Mammary epithelial cell (primary cell): ENCODE measurements at regions of chr1 and their contacts with region 1.

Region 1: DNA sequence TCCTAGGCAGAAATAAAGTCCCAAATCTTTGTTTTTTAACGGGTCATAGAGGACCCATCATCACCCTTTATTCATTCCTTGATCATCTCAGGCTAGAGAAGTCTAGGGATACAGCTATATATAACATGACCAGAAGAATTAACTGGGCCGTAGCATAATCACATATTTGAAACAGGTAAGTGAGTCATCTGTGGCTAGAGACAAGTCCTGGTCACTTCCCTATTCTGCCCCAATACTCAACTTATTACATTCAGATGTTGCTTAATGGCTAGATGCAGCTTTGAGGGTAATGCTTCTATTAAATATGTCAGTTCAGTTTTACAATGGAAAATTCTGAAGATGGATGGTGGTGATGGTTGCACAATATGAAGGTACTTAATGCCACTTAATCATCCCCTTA is 47.0 kb downstream of the EXO1 start:
- DNase-seq: peak; percentile 42
- H3K4me3 ChIP-seq: no peak overlapping the region
- H3K27ac ChIP-seq: no peak overlapping the region
- H3K4me1 ChIP-seq: no peaks in the 10 kb centered on the region
- H3K27me3 ChIP-seq: no peaks in the 10 kb centered on the region
- CTCF ChIP-seq: no peak

Region 2: DNA sequence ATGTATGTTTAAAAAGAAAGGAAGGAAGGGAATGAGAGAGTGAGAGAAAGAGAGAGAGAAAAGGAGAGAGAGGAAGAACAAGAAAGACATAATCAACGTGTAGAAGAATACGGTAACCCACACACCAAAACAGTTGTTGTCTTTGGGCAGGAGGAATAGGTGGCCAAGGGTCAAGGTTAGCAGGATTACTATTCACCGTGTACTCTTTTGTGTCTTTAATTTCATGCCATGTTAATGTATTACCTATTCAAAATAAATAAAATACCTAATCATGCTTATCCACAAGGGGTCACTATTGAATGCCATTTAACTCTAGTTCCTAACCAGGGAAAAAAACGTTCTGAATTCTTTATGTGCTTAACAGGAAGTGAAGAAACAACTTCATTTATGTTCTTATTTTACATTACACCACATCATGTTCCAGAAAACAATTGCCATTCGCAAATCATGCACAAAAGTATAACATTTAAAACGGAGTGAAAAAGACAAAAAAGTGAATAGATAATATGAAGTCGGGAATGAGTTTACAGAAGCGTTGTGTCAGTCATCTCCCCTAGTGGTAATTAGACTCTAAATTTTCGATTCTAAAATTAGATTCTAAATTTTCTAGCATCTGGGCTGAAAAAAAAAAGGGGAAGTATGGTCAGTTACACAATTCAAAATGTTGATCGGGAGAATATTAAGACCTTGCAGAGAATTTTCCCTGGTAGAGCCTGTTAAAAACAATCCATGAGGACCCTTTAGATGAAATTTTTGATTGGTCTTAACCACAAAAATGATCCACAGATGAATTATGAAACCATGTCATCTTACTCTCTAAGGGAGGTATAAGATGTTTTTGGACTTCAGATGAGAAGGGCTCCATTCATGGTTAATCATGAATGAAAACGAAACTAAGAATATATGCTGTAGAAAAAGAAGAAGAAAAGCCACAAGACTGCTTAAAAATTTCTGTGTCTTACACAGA is 363.5 kb before region 1 on chr1:
- CTCF ChIA-PET with region 1: no interaction called
- dilution Hi-C with region 1: no loop called
- in situ Hi-C with region 1: no loop called
- intact Hi-C with region 1: loop called (anchors 5 kb)
- DNase-seq: peak; percentile 74
- H3K4me3 ChIP-seq: peak overlapping the region; percentile 44 to 82 (median 53)
- H3K27ac ChIP-seq: peak overlapping the region; percentile 92
- H3K4me1 ChIP-seq: peaks cover 15% of the 10 kb centered on the region
- H3K27me3 ChIP-seq: no peaks in the 10 kb centered on the region
- CTCF ChIP-seq: peak; percentile 54 to 55

Region 3: GRCh38 chr1:241592273-241592958 is 302.6 kb before region 1 on chr1:
- CTCF ChIA-PET with region 1: no interaction called
- dilution Hi-C with region 1: no loop called
- in situ Hi-C with region 1: no loop called
- intact Hi-C with region 1: no loop called
- DNase-seq: peak; percentile 99
- H3K4me3 ChIP-seq: no peak overlapping the region
- H3K27ac ChIP-seq: peak overlapping the region; percentile 97
- H3K4me1 ChIP-seq: peaks cover 45% of the 10 kb centered on the region
- H3K27me3 ChIP-seq: no peaks in the 10 kb centered on the region
- CTCF ChIP-seq: no peak

Region 4: GRCh38 chr1:241985787-241986186 is 90.8 kb after region 1 on chr1:
- CTCF ChIA-PET with region 1: interaction called, 4 read pairs
- dilution Hi-C with region 1: no loop called
- in situ Hi-C with region 1: no loop called
- intact Hi-C with region 1: loop called (anchors 1 kb)
- DNase-seq: peak; percentile 40
- H3K4me3 ChIP-seq: no peak overlapping the region
- H3K27ac ChIP-seq: no peak overlapping the region
- H3K4me1 ChIP-seq: no peaks in the 10 kb centered on the region
- H3K27me3 ChIP-seq: no peaks in the 10 kb centered on the region
- CTCF ChIP-seq: peak; percentile 60

Region 5: DNA sequence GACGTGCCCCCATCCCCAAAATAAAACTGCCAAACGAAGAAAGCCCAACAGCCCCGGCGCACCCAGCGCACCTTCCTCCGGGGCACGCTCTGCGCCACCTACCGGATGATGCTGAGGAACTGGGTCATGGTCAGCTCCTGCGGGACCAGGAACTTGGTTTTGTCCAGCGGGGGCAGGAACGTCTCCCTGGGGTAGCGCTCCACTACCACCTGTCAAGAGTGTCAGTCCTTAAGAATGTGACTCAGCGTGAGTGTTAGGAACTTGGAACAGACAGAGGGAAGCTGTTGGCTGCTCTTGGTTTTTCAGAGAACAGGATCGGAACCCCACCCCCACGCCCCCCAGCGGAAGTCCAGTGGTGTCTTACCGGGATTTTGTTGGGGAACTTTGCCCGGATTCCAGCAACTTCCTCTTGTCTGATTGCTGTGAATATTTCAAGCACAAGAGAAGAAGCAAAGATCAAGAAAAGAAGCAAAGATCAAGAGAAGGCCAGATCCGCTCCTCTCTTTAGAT is 103.5 kb after region 1 on chr1:
- CTCF ChIA-PET with region 1: no interaction called
- dilution Hi-C with region 1: no loop called
- in situ Hi-C with region 1: loop called in 1 of 2 experiments (anchors 5 kb)
- intact Hi-C with region 1: loop called (anchors 1 kb)
- DNase-seq: peak; percentile 78
- H3K4me3 ChIP-seq: no peak overlapping the region
- H3K27ac ChIP-seq: no peak overlapping the region
- H3K4me1 ChIP-seq: peaks cover 3% of the 10 kb centered on the region
- H3K27me3 ChIP-seq: no peaks in the 10 kb centered on the region
- CTCF ChIP-seq: peak in 1 of 2 donors; percentile 48

Region 6: DNA sequence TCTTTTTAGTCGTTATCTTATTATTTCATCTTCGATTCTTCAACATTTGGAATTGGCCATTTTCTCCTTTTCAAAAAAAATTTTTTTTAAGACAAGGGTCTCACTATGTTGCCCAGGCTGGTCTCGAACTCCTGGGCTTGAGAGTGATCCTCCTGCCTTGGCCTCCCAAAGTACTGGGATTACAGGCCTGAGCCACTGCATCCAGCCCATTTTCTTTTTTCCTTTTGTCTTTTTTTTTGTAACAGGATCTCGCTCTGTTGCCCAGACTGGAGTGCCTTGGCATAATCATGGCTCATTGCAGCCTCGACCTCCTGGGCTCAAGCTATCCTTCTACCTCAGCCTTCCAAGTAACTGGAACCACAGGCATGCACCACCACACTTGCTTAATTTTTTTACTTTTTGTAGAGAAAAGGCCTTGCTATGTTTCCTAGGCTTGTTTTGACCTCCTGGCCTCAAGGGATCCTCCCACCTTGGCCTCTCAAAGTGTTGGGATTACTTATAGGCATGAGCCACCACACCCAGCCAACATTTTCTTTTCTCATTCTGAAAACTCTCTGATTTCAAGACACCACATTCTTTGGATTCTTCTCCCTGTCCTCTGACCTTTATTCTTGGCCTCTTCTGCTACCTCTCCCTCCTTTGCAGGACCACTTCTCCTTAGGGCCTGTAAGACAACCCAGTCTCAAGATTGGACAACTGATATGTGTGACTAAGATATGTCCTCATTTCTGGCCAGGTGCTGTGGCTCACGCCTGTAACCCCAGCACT is 109.9 kb after region 1 on chr1:
- CTCF ChIA-PET with region 1: no interaction called
- dilution Hi-C with region 1: no loop called
- in situ Hi-C with region 1: loop called in 1 of 2 experiments (anchors 5 kb)
- intact Hi-C with region 1: no loop called
- DNase-seq: no peak
- H3K4me3 ChIP-seq: no peak overlapping the region
- H3K27ac ChIP-seq: no peak overlapping the region
- H3K4me1 ChIP-seq: no peaks in the 10 kb centered on the region
- H3K27me3 ChIP-seq: peaks cover 3% of the 10 kb centered on the region
- CTCF ChIP-seq: no peak

Region 7: GRCh38 chr1:242017584-242018233 is 122.7 kb after region 1 on chr1:
- CTCF ChIA-PET with region 1: no interaction called
- dilution Hi-C with region 1: no loop called
- in situ Hi-C with region 1: no loop called
- intact Hi-C with region 1: loop called (anchors 1 kb)
- DNase-seq: peak; percentile 33
- H3K4me3 ChIP-seq: no peak overlapping the region
- H3K27ac ChIP-seq: no peak overlapping the region
- H3K4me1 ChIP-seq: peaks cover 4% of the 10 kb centered on the region
- H3K27me3 ChIP-seq: peaks cover 2% of the 10 kb centered on the region
- CTCF ChIP-seq: peak; percentile 66 to 79

Region 8: DNA sequence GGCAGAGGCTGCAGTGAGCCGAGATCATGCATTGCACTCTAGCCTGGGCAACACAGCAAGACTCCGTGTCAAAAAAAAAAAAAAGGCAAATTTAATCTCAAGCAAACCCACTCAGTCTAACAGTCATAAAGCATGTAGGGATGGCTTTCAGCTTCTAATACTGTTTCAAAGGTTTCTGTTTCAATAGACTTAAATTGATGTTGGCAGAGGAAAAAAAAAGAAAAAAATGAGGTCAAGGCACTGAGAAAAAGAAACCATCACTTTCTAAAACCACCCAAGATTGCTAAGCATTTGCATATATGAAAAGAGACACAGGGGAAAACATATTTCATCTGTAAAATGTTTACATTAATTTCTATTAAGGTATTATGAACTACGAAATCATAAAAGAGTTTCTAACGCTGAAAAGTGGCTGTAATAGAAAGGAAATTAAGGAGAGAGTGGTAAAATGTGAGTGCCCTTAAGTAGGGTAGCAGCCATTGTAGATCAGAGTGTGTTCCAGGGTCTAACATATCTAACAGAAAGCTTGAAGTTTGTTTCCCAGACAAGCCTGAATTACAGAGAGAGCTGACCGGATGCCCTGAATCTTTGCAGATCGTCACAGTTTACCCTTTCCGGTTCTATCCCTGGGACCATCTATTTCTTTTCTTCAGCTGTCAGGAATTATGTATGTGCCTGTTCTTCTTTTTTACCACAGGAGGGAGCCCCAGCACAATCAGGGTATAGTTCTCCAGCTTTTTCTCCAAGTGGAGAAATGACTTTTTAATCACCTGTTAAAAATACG is 559.4 kb after region 1 on chr1:
- CTCF ChIA-PET with region 1: no interaction called
- dilution Hi-C with region 1: no loop called
- in situ Hi-C with region 1: no loop called
- intact Hi-C with region 1: loop called (anchors 10 kb)
- DNase-seq: peak; percentile 48
- H3K4me3 ChIP-seq: no peak overlapping the region
- H3K27ac ChIP-seq: no peak overlapping the region
- H3K4me1 ChIP-seq: no peaks in the 10 kb centered on the region
- H3K27me3 ChIP-seq: no peaks in the 10 kb centered on the region
- CTCF ChIP-seq: peak; percentile 63 to 79